Activated B cell treated with CpG ODN at 0.5 μM for 24 hours (primary cell): ENCODE measurements at regions of chr18 and their contacts with region 1.

Region 1: GRCh38 chr18:79679111-79679872 is at the start of gene CTDP1:
- DNase-seq: peak; percentile 98
- ATAC-seq: peak; percentile 90
- H3K4me3 Mint-ChIP-seq: peak within 1 kb of the TSS; percentile 97
- H3K27ac Mint-ChIP-seq: peak within 1 kb of the TSS; percentile 98
- H3K4me1 Mint-ChIP-seq: peaks cover 47% of the 10 kb centered on the region
- H3K27me3 Mint-ChIP-seq: no peaks in the 10 kb centered on the region
- CTCF ChIP-seq: no peak
- total RNA-seq, gene CTDP1: 28.1 and 33.8 TPM in 2 replicates

Region 2: GRCh38 chr18:79393635-79394533 is 285.4 kb before region 1 on chr18:
- CTCF ChIA-PET with region 1: no interaction called
- POLR2A ChIA-PET with region 1: interaction called, 4 read pairs
- intact Hi-C with region 1: loop called (anchors 2 kb)
- DNase-seq: peak; percentile 52
- ATAC-seq: peak; percentile 13
- H3K4me3 Mint-ChIP-seq: peak overlapping the region; percentile 84
- H3K27ac Mint-ChIP-seq: peak overlapping the region; percentile 71
- H3K4me1 Mint-ChIP-seq: peaks cover 35% of the 10 kb centered on the region
- H3K27me3 Mint-ChIP-seq: no peaks in the 10 kb centered on the region
- CTCF ChIP-seq: no peak

Region 3: GRCh38 chr18:79447703-79448367 is 231.5 kb before region 1 on chr18:
- CTCF ChIA-PET with region 1: no interaction called
- POLR2A ChIA-PET with region 1: no interaction called
- intact Hi-C with region 1: no loop called
- DNase-seq: no peak
- ATAC-seq: no peak
- H3K4me3 Mint-ChIP-seq: no peak overlapping the region
- H3K27ac Mint-ChIP-seq: peak overlapping the region; percentile 18
- H3K4me1 Mint-ChIP-seq: peaks cover 26% of the 10 kb centered on the region
- H3K27me3 Mint-ChIP-seq: no peaks in the 10 kb centered on the region
- CTCF ChIP-seq: no peak

Region 4: DNA sequence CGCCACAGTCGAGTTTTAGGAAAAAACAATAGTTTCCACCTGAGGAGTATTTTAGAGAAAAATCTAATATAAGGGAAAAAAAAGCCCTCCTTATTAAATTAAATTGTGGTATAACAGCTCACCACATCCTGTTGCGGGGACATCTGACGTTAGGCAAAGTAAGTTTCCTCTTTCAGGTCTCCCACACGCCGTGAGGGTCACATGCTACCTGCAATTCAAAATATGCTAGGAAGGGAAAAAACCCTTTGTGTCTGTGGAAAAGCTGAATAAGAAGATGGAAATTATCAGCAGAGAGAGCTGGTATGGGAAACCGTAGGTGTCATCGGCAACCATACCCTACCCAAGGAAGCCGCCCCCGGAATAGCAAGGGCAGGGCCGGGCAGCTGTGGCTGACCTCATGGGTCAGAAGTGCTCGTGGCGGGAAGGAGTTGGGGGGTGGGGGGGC is 155.5 kb before region 1 on chr18:
- CTCF ChIA-PET with region 1: no interaction called
- POLR2A ChIA-PET with region 1: interaction called, 3 read pairs
- intact Hi-C with region 1: loop called (anchors 1 kb)
- DNase-seq: no peak
- ATAC-seq: peak; percentile 63
- H3K4me3 Mint-ChIP-seq: peak overlapping the region; percentile 81
- H3K27ac Mint-ChIP-seq: peak overlapping the region; percentile 91
- H3K4me1 Mint-ChIP-seq: peaks cover 64% of the 10 kb centered on the region
- H3K27me3 Mint-ChIP-seq: no peaks in the 10 kb centered on the region
- CTCF ChIP-seq: no peak

Region 5: GRCh38 chr18:79826966-79827365 is 147.7 kb after region 1 on chr18:
- CTCF ChIA-PET with region 1: no interaction called
- POLR2A ChIA-PET with region 1: no interaction called
- intact Hi-C with region 1: loop called (anchors 1 kb)
- DNase-seq: no peak
- ATAC-seq: peak; percentile 95
- H3K4me3 Mint-ChIP-seq: no peak overlapping the region
- H3K27ac Mint-ChIP-seq: no peak overlapping the region
- H3K4me1 Mint-ChIP-seq: peaks cover 19% of the 10 kb centered on the region
- H3K27me3 Mint-ChIP-seq: no peaks in the 10 kb centered on the region
- CTCF ChIP-seq: no peak

Region 6: DNA sequence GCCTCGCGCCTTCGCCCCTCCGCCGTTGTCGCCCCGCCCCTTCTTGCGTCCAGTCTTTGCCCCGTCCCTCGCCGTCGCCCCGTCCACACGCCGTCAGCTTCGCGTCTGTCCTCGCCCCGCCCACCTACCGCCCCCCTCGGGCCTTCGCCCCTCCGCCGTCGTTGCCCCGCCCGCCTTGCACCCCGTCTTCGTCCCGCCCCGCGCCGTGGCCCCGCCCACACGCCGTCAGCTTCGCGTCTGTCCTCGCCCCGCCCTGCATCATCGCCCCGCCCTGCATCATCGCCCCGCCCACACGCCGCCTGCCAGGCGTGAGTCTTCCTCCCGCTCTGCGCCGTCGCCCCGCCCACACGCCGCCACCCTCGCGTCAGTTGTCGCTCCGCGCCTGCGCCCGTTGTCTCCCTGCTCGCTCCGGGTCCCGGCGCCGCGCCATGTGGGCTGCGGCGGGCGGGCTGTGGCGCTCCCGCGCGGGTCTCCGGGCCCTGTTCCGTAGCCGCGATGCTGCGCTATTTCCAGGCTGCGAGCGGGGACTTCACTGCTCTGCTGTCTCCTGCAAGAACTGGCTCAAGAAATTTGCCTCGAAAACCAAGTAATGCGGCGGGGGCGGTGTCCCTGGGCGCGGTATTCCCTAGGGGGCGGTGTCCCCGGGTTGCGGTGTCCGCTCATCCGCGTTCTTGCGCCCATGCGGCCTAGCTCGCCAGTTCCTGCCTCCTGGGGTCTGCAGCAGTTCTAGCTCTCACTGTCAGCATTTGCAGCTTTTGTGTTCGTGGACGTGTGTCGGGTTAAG is 355.0 kb after region 1 on chr18 and contains the start of gene RBFA:
- CTCF ChIA-PET with region 1: no interaction called
- POLR2A ChIA-PET with region 1: interaction called, 11 read pairs
- intact Hi-C with region 1: loop called (anchors 1 kb)
- DNase-seq: peak; percentile 99
- ATAC-seq: peak; percentile 73
- H3K4me3 Mint-ChIP-seq: peak within 1 kb of the TSS; percentile 90
- H3K27ac Mint-ChIP-seq: peak within 1 kb of the TSS; percentile 93
- H3K4me1 Mint-ChIP-seq: peaks cover 24% of the 10 kb centered on the region
- H3K27me3 Mint-ChIP-seq: no peaks in the 10 kb centered on the region
- CTCF ChIP-seq: no peak
- total RNA-seq, gene RBFA: 21.6 and 23.3 TPM in 2 replicates